Gastrocnemius medialis (tissue), 4 donors: ENCODE measurements at regions of chr19 and their contacts with region 1.

Region 1: DNA sequence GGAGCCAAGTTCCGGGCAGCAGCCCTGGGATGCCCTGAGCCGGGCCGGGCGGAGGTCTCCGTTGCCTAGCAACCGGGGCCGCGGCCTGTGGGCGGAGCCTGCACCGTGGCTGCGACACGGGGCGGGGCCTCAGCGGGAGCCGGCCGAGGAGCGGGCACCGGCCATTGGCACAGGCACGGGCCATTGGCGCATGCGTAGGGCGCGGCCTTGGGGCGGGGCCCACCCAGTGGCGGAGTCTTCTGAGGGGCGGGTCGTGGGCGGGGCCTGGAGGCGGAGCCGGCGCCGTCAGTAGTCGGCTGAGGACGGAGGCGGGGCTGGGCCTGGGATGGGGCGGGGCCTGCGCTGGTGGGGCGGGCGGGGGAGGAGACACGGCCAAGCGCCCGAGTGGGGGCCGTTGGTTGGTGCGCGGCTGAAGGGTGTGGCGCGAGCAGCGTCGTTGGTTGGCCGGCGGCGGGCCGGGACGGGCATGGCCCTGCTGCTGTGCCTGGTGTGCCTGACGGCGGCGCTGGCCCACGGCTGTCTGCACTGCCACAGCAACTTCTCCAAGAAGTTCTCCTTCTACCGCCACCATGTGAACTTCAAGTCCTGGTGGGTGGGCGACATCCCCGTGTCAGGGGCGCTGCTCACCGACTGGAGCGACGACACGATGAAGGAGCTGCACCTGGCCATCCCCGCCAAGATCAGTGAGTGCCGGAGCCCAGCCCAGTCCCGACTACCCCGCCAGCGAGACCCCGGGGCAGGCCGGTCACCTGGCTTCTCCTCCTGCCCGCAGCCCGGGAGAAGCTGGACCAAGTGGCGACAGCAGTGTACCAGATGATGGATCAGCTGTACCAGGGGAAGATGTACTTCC is at the start of gene IZUMO4:
- DNase-seq: peak; percentile 97 to 98
- ATAC-seq: peak; percentile 86 to 87
- H3K4me3 ChIP-seq: peak within 1 kb of the TSS; percentile 82 to 91 (median 87)
- H3K27ac ChIP-seq: peak within 1 kb of the TSS; percentile 86 to 99 (median 92)
- H3K4me1 ChIP-seq: peaks cover 38 to 39% of the 10 kb centered on the region in 2 donors
- H3K27me3 ChIP-seq: no peaks in the 10 kb centered on the region
- CTCF ChIP-seq: peak; percentile 13 to 56 (median 28)
- POLR2A ChIP-seq: peak; percentile 37 to 40
- total RNA-seq, gene IZUMO4: 0.93 to 1.4 TPM in 2 of 4 donors, not detected in the others

Region 2: GRCh38 chr19:2032296-2032941 is 64.3 kb before region 1 on chr19:
- in situ Hi-C with region 1: no loop called
- intact Hi-C with region 1: no loop called
- DNase-seq: peak; percentile 96 to 99
- ATAC-seq: peak; percentile 79 to 84
- H3K4me3 ChIP-seq: peak overlapping the region; percentile 36 to 45 (median 38)
- H3K27ac ChIP-seq: peak overlapping the region; percentile 96 to 100 (median 100)
- H3K4me1 ChIP-seq: peaks cover 15 to 26% of the 10 kb centered on the region in 2 donors
- H3K27me3 ChIP-seq: no peaks in the 10 kb centered on the region
- CTCF ChIP-seq: no peak
- POLR2A ChIP-seq: peak; percentile 46 to 88

Region 3: GRCh38 chr19:2084993-2085720 is 11.5 kb before region 1 on chr19:
- in situ Hi-C with region 1: no loop called
- intact Hi-C with region 1: no loop called
- DNase-seq: peak in 1 of 2 donors; percentile 65
- ATAC-seq: no peak
- H3K4me3 ChIP-seq: peak overlapping the region in 1 of 4 donors; percentile 21
- H3K27ac ChIP-seq: peak overlapping the region; percentile 29 to 78 (median 56)
- H3K4me1 ChIP-seq: peaks cover 14 to 29% of the 10 kb centered on the region in 2 donors
- H3K27me3 ChIP-seq: no peaks in the 10 kb centered on the region
- CTCF ChIP-seq: no peak
- POLR2A ChIP-seq: no peak

Region 4: GRCh38 chr19:2255982-2256685 is 159.4 kb after region 1 on chr19 and contains the start of gene JSRP1:
- in situ Hi-C with region 1: no loop called
- intact Hi-C with region 1: loop called (anchors 1 kb)
- DNase-seq: peak; percentile 95 to 98
- ATAC-seq: peak; percentile 85 to 86
- H3K4me3 ChIP-seq: peak within 1 kb of the TSS; percentile 60 to 77 (median 68)
- H3K27ac ChIP-seq: peak within 1 kb of the TSS; percentile 98 to 100 (median 100)
- H3K4me1 ChIP-seq: peaks cover 17 to 35% of the 10 kb centered on the region in 2 donors
- H3K27me3 ChIP-seq: no peaks in the 10 kb centered on the region
- CTCF ChIP-seq: peak in 2 of 5 experiments; percentile 23 to 42
- POLR2A ChIP-seq: peak; percentile 89 to 90
- total RNA-seq, gene JSRP1: 152 to 383 (median 303) TPM